ENCODE measurements at regions of chr14 and their contacts with region 1.

Region 1: DNA sequence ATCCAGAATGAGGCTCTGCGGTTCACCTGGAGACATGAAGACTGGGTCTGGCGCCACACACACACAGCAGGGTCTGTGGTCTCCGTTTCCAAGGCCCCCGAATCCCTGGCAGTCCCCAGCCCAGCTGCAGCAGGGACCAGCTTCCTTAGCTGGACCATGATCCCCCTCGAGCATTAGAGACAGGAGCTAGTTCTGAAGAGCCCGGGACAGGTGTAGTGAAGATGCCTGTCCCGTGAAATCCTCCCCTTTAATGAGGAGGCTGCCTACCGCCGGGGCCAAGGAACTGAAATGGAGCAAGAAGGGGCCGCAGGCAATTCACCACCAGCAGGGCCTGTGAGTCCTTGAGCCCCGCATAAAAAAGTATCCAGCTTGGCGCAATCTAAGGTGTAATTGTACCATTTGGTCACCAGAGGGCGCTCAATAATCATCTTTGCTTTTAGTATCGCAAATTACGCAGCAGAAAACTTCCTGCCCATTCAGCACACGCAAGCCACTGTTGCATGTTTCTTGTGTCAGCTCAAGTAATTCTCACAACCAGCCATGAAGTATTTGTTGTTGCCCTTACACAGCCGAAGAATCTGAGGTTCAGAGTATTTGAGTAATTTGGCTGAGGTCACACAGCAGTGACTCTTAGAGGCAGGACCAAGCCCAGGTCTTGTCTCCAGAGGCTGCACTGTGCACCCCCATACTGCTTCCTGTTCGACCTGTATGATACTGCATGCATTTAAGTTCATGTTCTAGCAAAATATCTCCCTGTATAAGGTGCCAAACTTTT is 54.3 kb upstream of the PPP2R5C start:
- DNase-seq: peak; percentile 74 to 87
- H3K4me3 ChIP-seq: no peak overlapping the region
- H3K27ac ChIP-seq: peak overlapping the region; percentile 48; the same call in 1 of the 2 replicates
- H3K4me1 ChIP-seq: peaks cover 34% of the 10 kb centered on the region
- H3K27me3 ChIP-seq: no peaks in the 10 kb centered on the region
- CTCF ChIP-seq: peak; percentile 100

Region 2: DNA sequence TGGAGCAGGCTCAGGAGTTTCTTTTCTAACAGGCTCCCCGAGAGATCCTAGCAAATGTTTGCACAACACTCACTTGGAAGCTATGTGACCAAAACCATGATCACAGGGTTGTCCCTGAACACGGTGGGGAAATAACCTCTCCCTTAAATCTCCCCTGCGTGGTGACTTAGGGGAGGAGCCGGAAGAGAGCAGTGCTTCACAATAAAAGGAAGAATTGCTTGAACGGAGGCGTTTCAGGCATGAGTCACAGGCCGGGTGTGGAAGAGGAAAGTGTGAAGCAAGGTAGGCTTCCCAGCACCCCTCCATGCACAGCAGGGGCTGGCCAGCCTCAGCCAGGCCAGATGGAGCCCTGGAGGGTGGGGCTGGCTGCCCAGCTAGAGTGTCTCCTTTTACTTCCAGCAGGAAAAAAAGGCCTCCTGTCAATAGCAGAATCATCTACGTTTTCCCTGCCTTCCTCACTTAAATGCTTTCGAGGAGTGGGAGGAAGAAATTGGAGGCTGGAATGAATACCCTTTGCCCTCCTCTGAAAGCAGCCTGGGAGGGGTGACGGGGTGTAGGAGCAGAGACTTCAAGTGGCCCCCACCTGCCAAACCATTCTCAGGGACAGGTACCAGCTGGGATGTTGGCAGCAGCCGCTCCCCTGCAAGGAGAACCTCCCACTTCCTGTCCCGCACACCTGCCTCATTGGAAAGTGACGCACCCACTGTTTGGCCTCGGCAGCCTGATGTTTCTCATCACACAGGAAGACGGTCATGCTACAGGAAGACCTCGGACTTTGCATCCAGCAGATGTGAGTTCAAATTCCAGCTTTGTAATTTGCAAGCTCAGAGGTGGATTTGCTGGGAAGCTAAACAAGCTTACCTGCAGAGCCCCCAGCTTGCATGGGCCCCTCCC is 24.2 kb after region 1 on chr14:
- CTCF ChIA-PET with region 1: interaction called, 12 read pairs
- POLR2A ChIA-PET with region 1: interaction called, 10 read pairs
- intact Hi-C with region 1: loop called (anchors 1 kb)
- DNase-seq: peak; percentile 98 to 100
- H3K4me3 ChIP-seq: peak overlapping the region; percentile 54
- H3K27ac ChIP-seq: peak overlapping the region; percentile 92
- H3K4me1 ChIP-seq: peaks cover 50% of the 10 kb centered on the region
- H3K27me3 ChIP-seq: no peaks in the 10 kb centered on the region
- CTCF ChIP-seq: no peak

Region 3: GRCh38 chr14:101843665-101844064 is 136.4 kb after region 1 on chr14:
- CTCF ChIA-PET with region 1: no interaction called
- POLR2A ChIA-PET with region 1: no interaction called
- intact Hi-C with region 1: loop called (anchors 1 kb)
- DNase-seq: peak in 1 of 2 experiments; percentile 17
- H3K4me3 ChIP-seq: no peak overlapping the region
- H3K27ac ChIP-seq: no peak overlapping the region
- H3K4me1 ChIP-seq: no peaks in the 10 kb centered on the region
- H3K27me3 ChIP-seq: no peaks in the 10 kb centered on the region
- CTCF ChIP-seq: peak; percentile 66

Region 4: DNA sequence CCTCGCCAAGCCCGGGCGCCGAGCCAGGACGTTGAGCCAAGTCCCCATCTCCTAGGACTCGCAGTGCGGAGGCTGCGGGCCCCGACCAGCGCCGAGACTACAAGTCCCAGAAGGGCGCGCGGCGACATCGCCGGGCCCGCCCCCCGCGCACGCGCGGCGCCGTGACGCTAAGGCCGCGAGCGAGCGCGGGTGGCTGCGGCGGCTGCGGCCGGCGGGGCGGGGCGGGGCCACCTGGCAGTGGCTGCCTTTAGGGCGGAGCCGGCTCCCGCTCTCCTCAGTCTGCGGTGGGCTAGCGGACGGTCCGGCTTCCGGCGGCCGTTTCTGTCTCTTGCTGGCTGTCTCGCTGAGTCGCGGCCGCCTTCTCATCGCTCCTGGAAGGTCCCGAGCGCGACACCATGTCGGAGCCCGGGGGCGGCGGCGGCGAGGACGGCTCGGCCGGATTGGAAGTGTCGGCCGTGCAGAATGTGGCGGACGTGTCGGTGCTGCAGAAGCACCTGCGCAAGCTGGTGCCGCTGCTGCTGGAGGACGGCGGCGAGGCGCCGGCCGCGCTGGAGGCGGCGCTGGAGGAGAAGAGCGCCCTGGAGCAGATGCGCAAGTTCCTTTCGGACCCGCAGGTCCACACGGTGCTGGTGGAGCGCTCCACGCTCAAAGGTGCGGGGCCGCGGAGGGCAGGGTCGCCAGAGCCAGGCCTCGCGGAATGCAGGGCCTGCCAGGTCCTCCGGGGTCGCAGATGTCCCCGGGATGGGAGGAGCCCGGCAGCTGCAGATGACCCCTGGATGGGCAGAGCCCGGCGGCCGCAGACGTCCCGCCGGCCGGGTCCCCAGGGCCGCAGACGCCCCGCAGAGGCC is 257.3 kb after region 1 on chr14 and contains the start of gene DYNC1H1:
- CTCF ChIA-PET with region 1: interaction called, 5 read pairs
- POLR2A ChIA-PET with region 1: interaction called, 8 read pairs
- intact Hi-C with region 1: loop called (anchors 1 kb)
- DNase-seq: peak; percentile 83 to 99
- H3K4me3 ChIP-seq: peak within 1 kb of the TSS; percentile 76
- H3K27ac ChIP-seq: peak within 1 kb of the TSS; percentile 75
- H3K4me1 ChIP-seq: peaks cover 59% of the 10 kb centered on the region
- H3K27me3 ChIP-seq: no peaks in the 10 kb centered on the region
- CTCF ChIP-seq: no peak; the same call in 1 of the 2 replicates
- total RNA-seq, gene DYNC1H1: 1,203 and 1,268 TPM in 2 replicates

Region 5: DNA sequence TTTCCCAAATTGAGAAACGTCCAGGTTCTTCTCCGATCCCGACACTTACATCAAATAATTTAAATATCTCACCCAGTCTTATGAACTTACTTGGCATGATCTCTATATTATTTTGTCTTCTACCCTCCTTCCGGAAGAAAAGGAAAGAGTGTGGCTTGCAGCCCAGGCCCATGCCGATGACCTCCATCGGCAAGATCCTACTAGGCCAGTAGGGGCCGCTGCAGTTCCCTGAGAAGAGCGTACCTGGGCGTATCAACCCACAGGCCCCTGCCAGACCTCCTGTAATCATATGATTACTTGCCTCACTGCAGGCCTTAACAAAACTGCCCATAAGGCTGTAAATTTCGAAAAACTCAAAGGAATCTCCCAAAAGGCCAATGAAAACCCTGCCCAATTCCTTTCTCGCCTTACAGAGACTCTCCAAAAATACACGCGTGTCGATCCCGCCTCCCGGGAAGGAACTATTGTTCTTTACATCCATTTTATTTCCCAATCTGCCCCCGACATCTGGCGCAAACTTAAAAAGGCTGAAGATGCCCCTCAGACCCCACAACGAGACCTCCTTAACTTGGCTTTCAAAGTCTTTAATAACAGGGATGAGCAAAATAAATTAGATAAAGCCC is 528.1 kb after region 1 on chr14:
- CTCF ChIA-PET with region 1: interaction called, 4 read pairs
- POLR2A ChIA-PET with region 1: no interaction called
- intact Hi-C with region 1: loop called (anchors 10 kb)
- DNase-seq: peak; percentile 76 to 92
- H3K4me3 ChIP-seq: no peak overlapping the region
- H3K27ac ChIP-seq: peak overlapping the region; percentile 7; the same call in 1 of the 2 replicates
- H3K4me1 ChIP-seq: peaks cover 4% of the 10 kb centered on the region
- H3K27me3 ChIP-seq: no peaks in the 10 kb centered on the region
- CTCF ChIP-seq: peak; percentile 99

Measured in PC-9 (cell line).